ENCODE measurements at regions of chr17 and their contacts with region 1.

Region 1: DNA sequence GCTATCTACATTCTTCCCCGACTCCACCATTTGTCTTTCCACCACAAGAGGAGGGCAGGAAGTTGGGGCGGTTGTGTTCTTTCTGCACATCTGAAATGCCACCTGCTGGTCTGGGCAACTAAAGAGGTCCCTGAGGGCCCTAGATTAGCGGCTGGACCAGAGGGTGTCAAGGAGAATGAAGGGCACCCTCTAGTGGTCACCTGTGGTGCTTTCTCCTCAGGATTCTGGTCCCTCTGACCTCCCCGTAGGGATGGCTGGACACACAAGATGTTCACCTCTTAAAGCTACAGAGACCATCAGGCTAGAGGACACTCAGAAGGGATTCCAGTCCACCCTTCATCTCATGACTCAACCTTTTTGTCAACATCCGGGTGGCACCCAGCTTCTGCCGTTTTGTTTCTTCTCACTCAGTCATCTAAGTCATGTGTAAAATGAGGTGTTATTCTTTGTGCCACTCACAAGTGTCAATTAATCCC is 2.9 kb upstream of the SCIMP start:
- DNase-seq: no peak
- H3K4me3 ChIP-seq: no peak overlapping the region
- CTCF ChIP-seq: peak; percentile 60

Region 2: DNA sequence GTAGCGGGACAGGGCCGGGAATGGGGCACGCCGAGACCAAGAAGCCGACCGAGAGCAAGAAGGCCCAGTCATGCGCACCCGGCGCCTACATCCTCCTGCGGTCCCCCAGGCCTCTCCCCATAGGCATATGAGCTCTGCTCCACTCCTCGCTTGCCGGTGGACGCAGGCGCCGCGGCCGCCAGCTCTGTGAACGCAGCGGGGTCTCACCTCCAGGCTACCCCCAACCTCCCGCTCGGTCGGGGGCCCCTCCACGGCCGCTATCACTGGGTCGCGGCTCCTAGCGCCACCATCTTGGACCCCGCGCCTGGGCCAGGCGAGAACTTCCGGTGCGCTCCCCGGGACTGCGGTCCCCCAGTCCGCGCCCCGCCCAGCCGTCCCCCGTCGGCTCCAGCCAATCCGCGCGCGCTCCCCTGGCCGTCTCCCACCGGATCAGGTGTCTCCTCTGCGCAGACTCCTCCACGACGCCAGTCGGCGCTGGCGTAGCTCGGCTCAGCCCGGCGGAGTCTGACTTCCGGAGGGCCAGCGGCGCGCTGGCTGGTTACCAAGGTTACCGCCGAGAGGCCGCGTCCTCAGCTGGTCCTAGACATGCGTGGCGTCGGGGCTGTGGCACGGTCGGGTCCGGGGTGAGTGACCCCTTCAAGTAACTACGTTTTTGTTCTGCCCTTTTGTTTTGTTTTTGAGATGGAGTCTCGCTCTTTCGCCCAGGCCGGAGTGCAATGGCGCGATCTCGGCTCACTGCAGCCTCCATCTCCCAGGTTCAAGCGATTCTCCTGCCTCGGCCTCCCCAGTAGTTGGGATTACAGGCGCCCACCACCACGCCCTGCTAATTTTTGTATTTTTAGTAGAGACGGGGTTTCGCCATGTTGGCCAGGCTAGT is 45.8 kb before region 1 on chr17 and contains the start of gene ZNF594:
- CTCF ChIA-PET with region 1: interaction called, 30 read pairs
- POLR2A ChIA-PET with region 1: no interaction called
- DNase-seq: peak; percentile 63
- H3K4me3 ChIP-seq: peak within 1 kb of the TSS; percentile 91
- CTCF ChIP-seq: peak; percentile 94

Region 3: GRCh38 chr17:5203908-5204294 is 33.7 kb before region 1 on chr17:
- CTCF ChIA-PET with region 1: interaction called, 10 read pairs
- POLR2A ChIA-PET with region 1: no interaction called
- DNase-seq: no peak
- H3K4me3 ChIP-seq: no peak overlapping the region
- CTCF ChIP-seq: no peak

Region 4: DNA sequence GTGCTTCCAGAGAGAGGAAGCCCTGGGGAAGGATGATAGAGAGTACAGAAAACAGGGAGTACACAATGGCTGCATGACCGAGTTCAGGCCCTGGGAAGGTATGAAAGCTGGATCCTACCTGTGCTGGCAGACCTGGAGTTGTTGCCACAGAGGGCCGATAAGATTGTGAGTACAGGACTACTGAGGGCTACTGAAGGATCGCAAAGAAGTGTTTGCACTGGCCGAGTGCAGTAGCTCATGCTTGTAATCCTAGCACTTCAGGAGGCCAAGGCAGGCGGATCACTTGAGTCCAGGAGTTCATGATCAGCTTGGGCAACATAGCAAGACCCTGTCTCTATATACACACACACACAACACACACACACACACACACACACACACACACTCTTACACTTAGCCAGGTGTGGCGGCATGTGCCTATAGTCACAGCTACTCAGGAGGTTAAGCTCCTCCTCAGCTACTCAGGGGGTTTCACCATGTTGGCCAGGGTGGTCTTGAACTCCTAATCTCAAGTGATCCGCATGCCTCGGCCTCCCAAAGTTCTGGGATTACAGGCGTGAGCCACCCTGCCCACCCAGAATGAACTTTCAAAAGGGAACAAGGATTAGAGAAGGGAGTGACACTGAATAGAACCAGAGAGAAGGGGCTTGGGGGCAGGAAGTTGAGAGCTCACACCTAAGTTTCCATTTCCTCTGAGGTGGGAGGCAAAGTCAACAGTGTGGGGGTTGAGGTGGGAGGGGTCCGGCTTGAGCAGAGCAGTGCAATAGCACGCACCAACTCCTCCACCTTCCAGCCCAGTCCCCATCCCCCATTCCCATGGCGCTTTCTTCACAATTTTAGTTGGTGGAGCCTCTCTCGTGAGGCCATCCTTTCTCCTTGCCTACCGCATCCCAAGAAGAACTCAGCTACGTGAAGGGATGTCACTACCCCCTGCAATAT is 10.4 kb before region 1 on chr17:
- CTCF ChIA-PET with region 1: interaction called, 37 read pairs
- POLR2A ChIA-PET with region 1: no interaction called
- DNase-seq: no peak
- H3K4me3 ChIP-seq: no peak overlapping the region
- CTCF ChIP-seq: no peak

Region 5: DNA sequence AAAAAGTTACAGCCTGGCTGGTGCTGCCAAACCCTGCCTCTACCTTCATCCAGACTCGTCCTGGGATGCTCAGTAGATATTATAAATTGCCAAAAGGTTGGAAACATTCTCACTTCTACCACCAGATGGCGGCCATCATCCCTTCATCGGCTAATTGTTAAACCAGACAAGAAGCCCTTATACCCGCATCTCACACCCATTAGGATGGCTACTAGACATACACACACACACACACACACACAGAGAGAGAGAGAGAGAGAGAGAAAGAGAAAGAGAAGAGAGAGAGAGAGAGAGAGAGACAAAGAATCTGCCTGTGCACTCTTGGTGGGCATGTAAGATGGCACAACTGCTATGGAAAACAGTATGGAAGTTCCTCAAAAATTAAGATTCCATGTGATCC is 12.0 kb after region 1 on chr17:
- CTCF ChIA-PET with region 1: interaction called, 13 read pairs
- POLR2A ChIA-PET with region 1: no interaction called
- DNase-seq: peak; percentile 41
- H3K4me3 ChIP-seq: no peak overlapping the region
- CTCF ChIP-seq: peak; percentile 67

Measured in AG04449 (cell line).